Dendritic cell treated with granulocyte-macrophage colony-stimulating factor and Interleukin-4, amounts not matched to agents 40 ng/mL and 50 ng/mL, for 4 days (primary cell): ENCODE measurements at regions of chr16 and their contacts with region 1.

Region 1: GRCh38 chr16:88633684-88634140 is 4.7 kb upstream of the IL17C start:
- H3K4me3 Mint-ChIP-seq: peak overlapping the region; percentile 88
- H3K27ac Mint-ChIP-seq: peak overlapping the region; percentile 83
- H3K4me1 Mint-ChIP-seq: peaks cover 58% of the 10 kb centered on the region
- H3K27me3 Mint-ChIP-seq: peaks cover 32% of the 10 kb centered on the region

Region 2: DNA sequence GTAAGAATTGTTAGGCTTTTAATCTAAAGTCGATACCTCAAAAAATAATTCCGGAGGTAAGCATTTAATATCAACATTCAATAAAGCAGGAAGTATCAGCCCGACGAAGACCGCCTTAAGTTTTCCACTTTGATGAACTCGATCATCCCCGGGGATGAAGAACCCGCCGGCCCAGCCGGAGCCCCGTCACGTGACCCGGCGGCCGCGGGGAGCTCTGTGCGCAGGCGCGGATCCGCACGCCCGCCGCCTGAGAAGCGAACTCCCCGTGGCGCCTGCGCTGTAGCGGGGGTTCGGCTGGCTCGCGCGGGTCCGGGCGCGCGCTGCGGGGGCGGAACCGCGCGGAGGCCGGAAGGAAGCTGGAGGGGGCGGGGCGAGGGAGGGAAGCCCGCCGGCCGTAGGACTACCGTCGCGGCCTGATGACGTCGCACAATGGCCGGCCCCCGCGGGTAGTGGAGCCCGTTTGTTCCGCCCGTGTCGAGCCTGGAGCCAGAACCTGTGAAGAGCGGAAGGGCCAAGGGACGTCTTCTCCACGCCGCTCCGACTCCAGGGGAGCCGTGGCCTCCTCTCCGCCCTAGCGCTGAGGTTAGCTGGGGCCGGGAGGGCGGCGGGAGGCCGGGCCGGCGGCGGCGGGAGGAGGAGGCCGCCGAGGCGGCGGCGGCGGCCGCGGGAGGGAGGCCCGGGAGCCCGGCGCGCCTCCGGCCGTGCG is 63.6 kb before region 1 on chr16 and contains the start of gene ZC3H18:
- intact Hi-C with region 1: no loop called
- H3K4me3 Mint-ChIP-seq: peak within 1 kb of the TSS; percentile 80
- H3K27ac Mint-ChIP-seq: peak within 1 kb of the TSS; percentile 84
- H3K4me1 Mint-ChIP-seq: peaks cover 35% of the 10 kb centered on the region
- H3K27me3 Mint-ChIP-seq: peaks cover 1% of the 10 kb centered on the region

Region 3: DNA sequence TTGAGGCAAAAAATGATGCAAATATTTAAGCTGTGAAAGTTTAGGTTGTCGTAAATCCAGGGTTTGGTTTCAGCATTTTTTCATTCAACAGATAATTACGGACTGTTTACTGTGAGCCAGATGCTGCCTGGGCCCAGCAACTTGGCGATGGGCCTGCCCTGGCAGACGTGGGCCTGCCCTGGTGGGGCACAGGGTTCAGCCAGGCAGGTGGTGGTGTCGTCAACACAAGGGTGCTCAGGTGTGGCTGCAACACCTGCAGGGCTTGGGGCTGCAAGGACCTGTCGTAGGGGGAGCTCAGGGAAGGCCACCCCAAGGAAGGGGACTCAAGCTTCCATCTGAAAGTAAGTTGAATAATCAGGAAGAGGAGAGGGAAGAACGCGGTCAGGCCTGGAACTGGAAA is 48.4 kb before region 1 on chr16:
- intact Hi-C with region 1: loop called (anchors 10 kb)
- H3K4me3 Mint-ChIP-seq: no peak overlapping the region
- H3K27ac Mint-ChIP-seq: no peak overlapping the region
- H3K4me1 Mint-ChIP-seq: peaks cover 12% of the 10 kb centered on the region
- H3K27me3 Mint-ChIP-seq: no peaks in the 10 kb centered on the region

Region 4: GRCh38 chr16:88686439-88687253 is 52.9 kb after region 1 on chr16 and contains the start of gene SNAI3:
- intact Hi-C with region 1: loop called (anchors 10 kb)
- H3K4me3 Mint-ChIP-seq: peak within 1 kb of the TSS; percentile 86
- H3K27ac Mint-ChIP-seq: peak within 1 kb of the TSS; percentile 98
- H3K4me1 Mint-ChIP-seq: peaks cover 82% of the 10 kb centered on the region
- H3K27me3 Mint-ChIP-seq: peaks cover 7% of the 10 kb centered on the region